ENCODE measurements at regions of chr6 and their contacts with region 1.

Region 1: GRCh38 chr6:94215552-94215951 is 796.2 kb upstream of the EPHA7 start:
- DNase-seq: no peak
- H3K4me3 ChIP-seq: no peak overlapping the region
- H3K27ac ChIP-seq: no peak overlapping the region
- H3K4me1 ChIP-seq: no peaks in the 10 kb centered on the region
- H3K27me3 ChIP-seq: no peaks in the 10 kb centered on the region
- CTCF ChIP-seq: no peak
- EP300 ChIP-seq: no peak
- POLR2A ChIP-seq: no peak

Region 2: DNA sequence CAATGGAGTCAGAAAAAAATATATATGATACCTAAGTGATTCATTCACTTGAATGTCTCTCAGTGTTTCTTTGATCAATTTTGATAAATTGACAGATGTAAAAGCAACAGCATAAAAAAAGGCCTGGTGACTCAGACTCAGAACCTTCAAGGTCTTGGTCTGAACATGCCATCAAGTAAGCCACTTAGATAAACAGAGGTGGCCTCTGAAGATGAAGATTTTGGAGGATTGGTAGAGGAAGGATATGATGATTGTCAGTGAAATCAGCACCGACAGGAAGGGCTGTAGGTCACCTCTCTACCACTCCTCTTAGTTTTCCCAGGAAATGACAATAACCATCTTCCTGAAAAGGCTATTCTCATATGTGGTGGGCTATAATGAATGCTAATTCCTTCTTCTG is 373.4 kb before region 1 on chr6:
- in situ Hi-C with region 1: no loop called
- intact Hi-C with region 1: loop called (anchors 5 kb)
- DNase-seq: no peak
- H3K4me3 ChIP-seq: no peak overlapping the region
- H3K27ac ChIP-seq: no peak overlapping the region
- H3K4me1 ChIP-seq: no peaks in the 10 kb centered on the region
- H3K27me3 ChIP-seq: no peaks in the 10 kb centered on the region
- CTCF ChIP-seq: no peak
- EP300 ChIP-seq: no peak
- POLR2A ChIP-seq: no peak